Activated naive CD4-positive, alpha-beta T cell treated with anti-CD3 and anti-CD28 coated beads for 36 hours (primary cell): ENCODE measurements at regions of chr1 and their contacts with region 1.

Region 1: GRCh38 chr1:23979878-23980724 is at the start of gene SRSF10:
- DNase-seq: peak; percentile 99
- H3K4me3 Mint-ChIP-seq: peak within 1 kb of the TSS; percentile 94
- H3K27ac Mint-ChIP-seq: peak within 1 kb of the TSS; percentile 99
- H3K4me1 Mint-ChIP-seq: peaks cover 31% of the 10 kb centered on the region
- H3K27me3 Mint-ChIP-seq: no peaks in the 10 kb centered on the region
- total RNA-seq, gene SRSF10: 169 to 178 TPM

Region 2: DNA sequence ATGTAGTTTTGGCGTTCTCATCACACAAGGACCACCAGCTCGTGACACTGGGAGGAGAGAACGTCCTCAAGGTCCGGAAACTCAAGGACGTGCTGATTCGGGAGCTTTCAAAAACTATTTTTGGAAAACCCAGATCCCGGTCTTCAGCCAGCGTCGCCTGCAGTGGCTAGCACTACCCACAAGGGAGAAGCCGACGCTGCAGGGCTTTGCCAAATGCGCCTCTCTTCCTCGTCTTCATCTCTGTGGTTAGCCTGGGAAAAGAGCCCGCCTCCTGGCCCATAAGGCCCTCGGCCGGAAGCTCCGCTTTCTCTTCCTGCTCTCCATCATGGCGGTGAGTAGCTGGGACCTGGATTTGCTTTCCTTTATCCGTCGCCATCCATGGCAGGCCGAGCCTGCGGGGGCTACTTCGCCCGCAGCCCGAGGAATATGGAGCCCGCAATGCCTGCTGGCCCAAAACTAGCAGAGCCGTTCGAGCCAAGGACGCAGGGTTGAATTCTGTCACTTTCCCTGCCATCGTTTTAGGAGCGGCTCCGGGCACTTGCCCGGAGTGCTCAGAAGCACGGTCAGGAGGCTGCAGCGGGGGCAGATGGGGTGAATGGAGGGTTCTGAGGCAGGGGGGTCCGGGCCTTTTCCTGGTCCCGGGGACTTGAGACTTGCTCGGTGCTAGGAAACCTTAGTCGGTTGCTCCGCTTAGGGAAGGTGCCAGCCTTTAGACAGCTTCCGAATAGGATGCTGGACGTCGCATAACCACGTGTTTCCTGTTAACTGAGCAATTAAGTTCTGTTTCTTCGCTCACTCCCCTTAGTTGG is 288.4 kb before region 1 on chr1 and contains the start of gene RPL11:
- CTCF ChIA-PET with region 1: no interaction called
- intact Hi-C with region 1: loop called (anchors 1 kb)
- DNase-seq: peak; percentile 93
- H3K4me3 Mint-ChIP-seq: peak within 1 kb of the TSS; percentile 95
- H3K27ac Mint-ChIP-seq: peak within 1 kb of the TSS; percentile 97
- H3K4me1 Mint-ChIP-seq: peaks cover 43% of the 10 kb centered on the region
- H3K27me3 Mint-ChIP-seq: peaks cover under 1% of the 10 kb centered on the region
- total RNA-seq, gene RPL11: 1,701 to 1,742 TPM

Region 3: DNA sequence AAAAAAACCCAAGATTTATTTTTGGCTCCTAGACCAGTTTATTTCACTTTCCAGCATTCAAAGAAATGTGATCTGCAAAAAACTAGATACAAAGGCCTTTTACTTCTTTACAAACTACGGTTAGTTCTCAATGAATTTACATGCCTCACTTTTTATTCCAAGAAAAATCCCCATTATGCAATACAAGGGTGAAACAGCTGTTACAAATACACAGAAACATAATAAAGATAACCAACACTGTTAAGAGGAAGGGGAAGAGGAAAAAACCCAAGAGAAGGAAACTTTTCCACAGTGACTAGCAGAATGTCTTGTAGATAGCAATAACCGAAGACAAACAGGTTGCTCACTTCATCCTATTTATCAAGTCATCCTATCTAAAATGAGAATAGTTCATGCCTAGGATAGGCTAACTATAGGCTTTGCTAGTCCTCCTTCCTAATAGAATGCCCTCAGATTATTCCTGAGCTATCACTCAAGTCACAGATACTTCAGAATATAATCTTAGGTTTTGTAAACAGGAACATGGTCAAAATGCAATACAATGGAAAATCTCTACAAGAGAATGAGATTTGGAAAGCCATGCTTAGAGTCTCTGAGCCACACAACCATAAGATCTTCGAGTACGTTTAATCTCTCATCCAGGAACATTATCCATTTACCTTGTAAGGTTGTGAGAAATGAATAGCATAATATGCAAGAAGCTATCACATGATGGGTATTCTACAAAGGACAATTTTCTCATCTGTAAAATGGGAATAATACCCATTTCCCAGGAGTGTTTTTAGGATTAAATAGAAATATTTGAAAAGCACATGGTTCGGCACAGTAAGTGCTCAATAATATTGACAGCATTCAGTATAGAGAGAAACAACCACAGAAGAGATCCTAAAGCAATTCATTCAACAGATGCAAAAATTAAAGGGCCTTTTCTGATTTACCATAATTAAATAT is 15.0 kb before region 1 on chr1:
- CTCF ChIA-PET with region 1: interaction called, 4 read pairs
- intact Hi-C with region 1: loop called (anchors 1 kb)
- DNase-seq: no peak
- H3K4me3 Mint-ChIP-seq: peak overlapping the region; percentile 49
- H3K27ac Mint-ChIP-seq: peak overlapping the region; percentile 89
- H3K4me1 Mint-ChIP-seq: peaks cover 71% of the 10 kb centered on the region
- H3K27me3 Mint-ChIP-seq: no peaks in the 10 kb centered on the region

Region 4: DNA sequence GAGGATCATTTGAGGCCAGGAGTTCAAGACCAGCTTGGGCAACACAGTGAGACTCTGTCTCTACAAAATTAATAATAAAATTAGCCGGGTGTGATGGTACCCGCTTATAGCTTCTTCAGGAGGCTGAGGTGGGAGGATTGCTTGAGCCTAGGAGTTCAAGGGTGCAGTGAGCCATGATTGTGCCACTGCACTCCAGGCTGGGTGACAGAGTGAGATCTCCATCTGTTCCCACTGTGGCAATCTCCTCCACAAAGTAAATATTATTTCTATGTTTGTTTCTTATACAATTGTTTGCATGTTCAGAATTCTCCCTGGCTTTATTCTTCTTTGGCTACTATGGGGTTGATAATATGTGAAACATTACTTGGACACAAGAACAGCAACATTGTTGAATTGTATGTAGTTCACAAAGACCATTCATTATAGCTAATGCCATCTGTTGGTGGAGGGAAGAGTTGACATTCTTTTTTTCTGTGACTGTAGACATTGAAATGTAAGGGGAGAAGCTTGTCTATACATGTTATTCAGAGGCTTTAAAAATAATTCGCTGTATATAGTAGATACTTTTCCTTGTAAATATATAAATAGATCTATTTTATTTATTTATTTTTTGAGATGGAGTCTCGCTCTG is 47.9 kb after region 1 on chr1:
- CTCF ChIA-PET with region 1: interaction called, 3 read pairs
- intact Hi-C with region 1: loop called (anchors 5 kb)
- DNase-seq: no peak
- H3K4me3 Mint-ChIP-seq: no peak overlapping the region
- H3K27ac Mint-ChIP-seq: no peak overlapping the region
- H3K4me1 Mint-ChIP-seq: no peaks in the 10 kb centered on the region
- H3K27me3 Mint-ChIP-seq: no peaks in the 10 kb centered on the region